Common myeloid progenitor, CD34-positive (primary cell): ENCODE measurements at regions of chr2 and their contacts with region 1.

Region 1: GRCh38 chr2:170341684-170342623 is 164.0 kb downstream of the MYO3B start:
- DNase-seq: peak; percentile 29 to 89 (median 80)
- H3K4me3 ChIP-seq: peak overlapping the region in 1 of 7 experiments; percentile 17
- H3K27ac ChIP-seq: peak overlapping the region in 1 of 2 experiments; percentile 65
- H3K4me1 ChIP-seq: peaks cover 13 to 30% (median 20%) of the 10 kb centered on the region in 4 experiments
- H3K27me3 ChIP-seq: no peaks in the 10 kb centered on the region

Region 2: DNA sequence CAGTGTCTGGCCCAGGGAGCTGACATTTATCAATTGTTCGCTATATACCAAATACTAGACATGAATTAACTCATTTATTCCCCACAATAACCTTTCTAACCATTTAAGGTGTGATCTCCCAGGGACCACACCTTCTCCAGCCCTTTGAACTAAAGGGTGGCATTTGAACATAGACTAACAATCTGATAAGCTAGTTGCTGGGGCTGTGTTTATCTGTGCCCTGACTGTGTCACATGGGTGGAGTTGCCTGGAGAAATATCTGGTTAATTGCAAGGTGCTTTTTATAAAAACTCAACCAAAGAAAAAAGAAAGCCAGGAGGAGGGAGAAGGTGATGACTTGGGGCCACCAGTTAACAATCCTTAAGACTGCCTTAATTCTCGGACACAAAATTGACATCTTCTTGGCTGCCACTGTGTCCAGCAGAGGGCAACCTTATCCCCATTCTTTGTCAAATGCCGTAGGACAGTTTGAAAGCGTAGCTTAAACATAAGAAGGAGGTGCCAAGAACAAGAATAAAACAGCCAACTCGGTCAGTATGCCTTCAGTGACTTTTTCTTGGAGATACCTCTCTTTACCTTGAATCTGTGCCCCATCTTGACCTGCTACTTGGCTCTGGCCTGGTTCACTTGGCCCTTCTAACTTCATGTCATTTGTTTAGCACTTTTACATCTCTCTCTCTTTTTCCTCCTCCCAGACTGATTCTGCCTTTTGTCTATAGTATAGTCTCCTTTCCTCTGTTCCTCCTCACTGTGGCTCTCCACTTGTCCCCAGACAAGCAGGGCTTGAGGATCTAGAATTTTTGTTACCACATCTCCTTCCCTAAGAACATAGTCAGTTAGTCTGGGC is 19.4 kb after region 1 on chr2:
- CTCF ChIA-PET with region 1: interaction called, 14 read pairs
- POLR2A ChIA-PET with region 1: no interaction called
- DNase-seq: peak; percentile 74 to 85 (median 83)
- H3K4me3 ChIP-seq: no peak overlapping the region
- H3K27ac ChIP-seq: no peak overlapping the region
- H3K4me1 ChIP-seq: peaks cover 14 to 28% (median 15%) of the 10 kb centered on the region in 4 experiments
- H3K27me3 ChIP-seq: no peaks in the 10 kb centered on the region

Region 3: DNA sequence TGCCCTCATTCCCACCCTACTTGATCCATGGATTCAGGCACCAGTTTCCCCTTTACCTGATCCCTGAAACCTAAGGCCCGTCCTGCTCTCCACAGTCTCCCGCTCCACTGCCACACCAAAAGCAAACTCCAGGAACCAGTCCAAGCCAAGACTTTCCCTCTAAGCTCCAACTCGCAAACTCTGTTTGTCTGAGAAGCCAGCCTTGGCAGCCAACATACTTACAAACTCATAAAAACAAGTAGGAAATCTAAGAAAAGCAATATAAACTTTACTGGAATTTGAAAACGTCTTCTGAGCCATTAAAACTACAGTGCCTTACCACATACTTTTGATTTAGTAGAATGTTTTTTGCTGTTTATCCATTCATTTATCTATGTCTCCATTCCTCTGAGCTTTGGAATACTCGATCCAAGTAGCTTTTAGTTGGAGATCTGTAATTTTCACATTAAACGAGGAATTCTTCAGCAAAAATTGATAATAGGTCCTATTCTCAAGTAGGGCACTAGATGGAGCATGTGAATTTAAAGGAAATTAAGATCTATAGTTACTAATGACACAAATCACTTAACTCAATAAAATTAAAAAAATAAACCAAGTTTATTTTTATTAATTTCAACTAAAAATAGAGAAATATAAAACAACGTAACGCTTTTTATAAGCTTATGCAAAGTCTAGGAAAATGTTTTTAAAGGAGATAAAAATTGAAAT is 35.7 kb after region 1 on chr2:
- CTCF ChIA-PET with region 1: no interaction called
- POLR2A ChIA-PET with region 1: no interaction called
- DNase-seq: no peak
- H3K4me3 ChIP-seq: no peak overlapping the region
- H3K27ac ChIP-seq: no peak overlapping the region
- H3K4me1 ChIP-seq: no peaks in the 10 kb centered on the region
- H3K27me3 ChIP-seq: no peaks in the 10 kb centered on the region